PC-3 (cell line): ENCODE measurements at regions of chrX and their contacts with region 1.

Region 1: GRCh38 chrX:136866337-136867095 is 14.0 kb downstream of the RBMX start:
- DNase-seq: no peak
- ATAC-seq: no peak
- H3K4me3 ChIP-seq: no peak overlapping the region
- H3K27ac ChIP-seq: no peak overlapping the region
- H3K4me1 ChIP-seq: no peaks in the 10 kb centered on the region
- H3K27me3 ChIP-seq: no peaks in the 10 kb centered on the region
- CTCF ChIP-seq: no peak

Region 2: GRCh38 chrX:136405126-136405525 is 461.4 kb before region 1 on chrX:
- CTCF ChIA-PET with region 1: interaction called, 11 read pairs
- POLR2A ChIA-PET with region 1: no interaction called
- intact Hi-C with region 1: no loop called
- DNase-seq: no peak
- ATAC-seq: no peak
- H3K4me3 ChIP-seq: no peak overlapping the region
- H3K27ac ChIP-seq: no peak overlapping the region
- H3K4me1 ChIP-seq: no peaks in the 10 kb centered on the region; the same call in 1 of the 2 replicates
- H3K27me3 ChIP-seq: no peaks in the 10 kb centered on the region
- CTCF ChIP-seq: no peak

Region 3: GRCh38 chrX:136899221-136899620 is 32.7 kb after region 1 on chrX:
- CTCF ChIA-PET with region 1: no interaction called
- POLR2A ChIA-PET with region 1: no interaction called
- intact Hi-C with region 1: no loop called
- DNase-seq: no peak
- ATAC-seq: no peak
- H3K4me3 ChIP-seq: no peak overlapping the region
- H3K27ac ChIP-seq: no peak overlapping the region
- H3K4me1 ChIP-seq: no peaks in the 10 kb centered on the region
- H3K27me3 ChIP-seq: no peaks in the 10 kb centered on the region
- CTCF ChIP-seq: no peak

Region 4: GRCh38 chrX:136909706-136910564 is 43.4 kb after region 1 on chrX:
- CTCF ChIA-PET with region 1: no interaction called
- POLR2A ChIA-PET with region 1: no interaction called
- intact Hi-C with region 1: no loop called
- DNase-seq: peak; percentile 83
- ATAC-seq: peak; percentile 75
- H3K4me3 ChIP-seq: peak overlapping the region; percentile 96
- H3K27ac ChIP-seq: peak overlapping the region; percentile 67
- H3K4me1 ChIP-seq: peaks cover 14% of the 10 kb centered on the region
- H3K27me3 ChIP-seq: no peaks in the 10 kb centered on the region
- CTCF ChIP-seq: no peak

Region 5: DNA sequence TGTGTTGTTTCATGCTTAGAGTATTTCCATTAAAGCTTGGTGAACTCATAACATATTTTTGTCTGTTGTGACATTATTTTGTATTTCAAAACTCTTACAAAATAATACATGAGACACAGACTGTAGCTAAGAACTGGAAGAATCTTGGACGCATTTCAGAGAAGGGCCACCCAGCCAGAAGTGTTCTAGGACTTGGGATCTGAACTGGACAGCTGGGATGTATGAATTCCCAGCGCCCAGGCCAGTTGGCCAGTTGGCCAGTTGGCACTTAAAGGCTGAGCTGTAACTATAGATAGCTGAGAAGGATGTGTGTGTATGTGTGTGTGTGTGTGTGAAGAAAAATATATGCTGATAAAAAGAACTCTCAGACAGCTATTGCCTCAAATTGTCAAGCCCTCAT is 360.6 kb after region 1 on chrX:
- CTCF ChIA-PET with region 1: no interaction called
- POLR2A ChIA-PET with region 1: no interaction called
- intact Hi-C with region 1: no loop called
- DNase-seq: no peak
- ATAC-seq: no peak
- H3K4me3 ChIP-seq: no peak overlapping the region
- H3K27ac ChIP-seq: no peak overlapping the region
- H3K4me1 ChIP-seq: no peaks in the 10 kb centered on the region
- H3K27me3 ChIP-seq: peaks cover 13% of the 10 kb centered on the region
- CTCF ChIP-seq: no peak